IMR-90 (cell line): ENCODE measurements at regions of chr11 and their contacts with region 1.

Region 1: GRCh38 chr11:129695575-129696308 is 119.9 kb upstream of the TMEM45B start:
- DNase-seq: peak; percentile 13
- ATAC-seq: peak; percentile 93
- H3K4me3 ChIP-seq: no peak overlapping the region
- H3K27ac ChIP-seq: no peak overlapping the region
- H3K4me1 ChIP-seq: no peaks in the 10 kb centered on the region
- H3K27me3 ChIP-seq: peaks cover 14% of the 10 kb centered on the region
- CTCF ChIP-seq: peak; percentile 61
- POLR2A ChIP-seq: no peak
- RAD21 ChIP-seq: peak; percentile 65

Region 2: DNA sequence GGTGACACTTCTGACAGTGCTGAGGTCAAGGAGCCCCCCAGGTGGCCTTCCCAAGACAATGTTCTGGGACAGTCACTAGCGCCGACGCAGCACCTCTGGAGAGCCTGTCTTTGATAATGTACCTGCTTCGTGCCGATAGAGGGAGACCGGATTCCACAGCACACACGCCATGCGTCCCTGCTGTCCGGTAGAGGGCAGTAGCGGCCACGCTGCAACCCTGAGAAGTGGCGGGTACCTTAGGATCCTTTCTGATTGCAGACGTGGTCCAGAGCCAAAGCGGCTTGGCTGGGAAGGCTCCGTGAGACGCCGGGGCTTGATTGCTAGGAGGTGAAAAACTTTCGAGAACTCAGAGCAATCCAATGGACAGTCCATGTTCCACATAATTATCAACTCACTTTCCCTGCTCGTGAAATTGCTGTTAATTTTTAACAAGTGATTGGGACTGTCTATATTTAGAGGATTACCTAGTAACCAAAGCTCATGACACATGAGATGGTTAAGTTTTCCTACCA is 331.5 kb before region 1 on chr11:
- CTCF ChIA-PET with region 1: interaction called, 3 read pairs
- POLR2A ChIA-PET with region 1: no interaction called
- dilution Hi-C with region 1: no loop called
- in situ Hi-C with region 1: no loop called
- intact Hi-C with region 1: loop called (anchors 1 kb)
- DNase-seq: peak; percentile 82
- ATAC-seq: peak; percentile 100
- H3K4me3 ChIP-seq: no peak overlapping the region
- H3K27ac ChIP-seq: no peak overlapping the region
- H3K4me1 ChIP-seq: no peaks in the 10 kb centered on the region
- H3K27me3 ChIP-seq: peaks cover 9% of the 10 kb centered on the region
- CTCF ChIP-seq: peak; percentile 100
- POLR2A ChIP-seq: peak; percentile 26; the same call in 1 of the 2 replicates
- RAD21 ChIP-seq: peak; percentile 97

Region 3: DNA sequence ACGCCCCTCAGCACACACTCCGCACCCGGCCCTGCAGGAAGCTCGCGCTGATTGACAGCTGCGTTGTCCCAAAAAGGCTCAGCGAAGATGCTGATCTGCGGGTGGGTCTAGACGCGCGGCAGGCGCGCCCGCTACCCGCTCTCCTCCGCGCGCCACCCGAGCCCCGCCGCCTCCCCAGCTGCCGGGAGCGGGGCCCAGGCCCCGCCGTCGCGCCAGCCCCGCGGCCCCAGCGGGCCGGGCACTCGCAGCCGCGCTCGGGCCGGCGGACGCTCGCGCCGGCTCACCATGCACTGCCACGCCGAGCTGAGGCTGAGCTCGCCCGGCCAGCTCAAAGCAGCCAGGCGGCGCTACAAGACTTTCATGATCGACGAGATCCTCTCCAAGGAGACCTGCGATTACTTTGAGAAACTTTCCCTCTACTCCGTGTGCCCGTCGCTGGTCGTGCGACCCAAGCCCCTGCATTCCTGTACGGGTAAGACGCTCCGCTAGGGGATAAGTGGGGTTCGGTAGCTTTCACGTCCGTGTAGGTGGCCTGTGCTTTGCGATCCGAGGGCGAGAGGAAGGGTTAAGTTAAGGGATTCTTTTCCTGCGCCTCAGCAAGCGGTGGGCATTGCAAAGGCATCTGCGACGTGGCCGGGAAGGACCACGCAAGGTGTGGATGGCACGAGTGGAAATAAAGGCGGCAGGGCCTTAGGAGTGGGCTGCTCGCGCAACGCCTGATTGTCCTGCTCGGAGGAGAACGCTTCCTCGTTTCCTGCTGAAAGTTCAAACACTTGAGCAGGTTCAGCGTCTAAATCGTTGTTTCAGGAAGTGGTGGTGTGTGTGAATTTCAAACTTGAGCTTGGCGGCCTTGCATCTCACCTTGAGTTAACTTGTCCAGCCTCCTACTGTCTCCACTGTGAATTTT is 319.7 kb before region 1 on chr11 and contains the start of gene BARX2:
- CTCF ChIA-PET with region 1: no interaction called
- POLR2A ChIA-PET with region 1: no interaction called
- dilution Hi-C with region 1: no loop called
- in situ Hi-C with region 1: loop called (anchors 5 kb)
- intact Hi-C with region 1: loop called (anchors 5 kb)
- DNase-seq: peak; percentile 54
- ATAC-seq: peak; percentile 83
- H3K4me3 ChIP-seq: no peak within 1 kb of the TSS
- H3K27ac ChIP-seq: no peak within 1 kb of the TSS
- H3K4me1 ChIP-seq: peaks cover 2% of the 10 kb centered on the region; the same call in 1 of the 2 replicates
- H3K27me3 ChIP-seq: peaks cover 65% of the 10 kb centered on the region
- CTCF ChIP-seq: peak; percentile 57
- POLR2A ChIP-seq: no peak
- RAD21 ChIP-seq: peak; percentile 58
- total RNA-seq, gene BARX2: not detected in 2 replicates

Region 4: GRCh38 chr11:129605815-129606214 is 89.9 kb before region 1 on chr11:
- CTCF ChIA-PET with region 1: no interaction called
- POLR2A ChIA-PET with region 1: interaction called, 18 read pairs
- dilution Hi-C with region 1: no loop called
- in situ Hi-C with region 1: no loop called
- intact Hi-C with region 1: no loop called
- DNase-seq: no peak
- ATAC-seq: no peak
- H3K4me3 ChIP-seq: no peak overlapping the region
- H3K27ac ChIP-seq: no peak overlapping the region
- H3K4me1 ChIP-seq: no peaks in the 10 kb centered on the region
- H3K27me3 ChIP-seq: peaks cover 4% of the 10 kb centered on the region; the same call in 1 of the 2 replicates
- CTCF ChIP-seq: no peak
- POLR2A ChIP-seq: no peak
- RAD21 ChIP-seq: no peak